Tibial artery (tissue), 4 donors: ENCODE measurements at regions of chr12 and their contacts with region 1.

Region 1: DNA sequence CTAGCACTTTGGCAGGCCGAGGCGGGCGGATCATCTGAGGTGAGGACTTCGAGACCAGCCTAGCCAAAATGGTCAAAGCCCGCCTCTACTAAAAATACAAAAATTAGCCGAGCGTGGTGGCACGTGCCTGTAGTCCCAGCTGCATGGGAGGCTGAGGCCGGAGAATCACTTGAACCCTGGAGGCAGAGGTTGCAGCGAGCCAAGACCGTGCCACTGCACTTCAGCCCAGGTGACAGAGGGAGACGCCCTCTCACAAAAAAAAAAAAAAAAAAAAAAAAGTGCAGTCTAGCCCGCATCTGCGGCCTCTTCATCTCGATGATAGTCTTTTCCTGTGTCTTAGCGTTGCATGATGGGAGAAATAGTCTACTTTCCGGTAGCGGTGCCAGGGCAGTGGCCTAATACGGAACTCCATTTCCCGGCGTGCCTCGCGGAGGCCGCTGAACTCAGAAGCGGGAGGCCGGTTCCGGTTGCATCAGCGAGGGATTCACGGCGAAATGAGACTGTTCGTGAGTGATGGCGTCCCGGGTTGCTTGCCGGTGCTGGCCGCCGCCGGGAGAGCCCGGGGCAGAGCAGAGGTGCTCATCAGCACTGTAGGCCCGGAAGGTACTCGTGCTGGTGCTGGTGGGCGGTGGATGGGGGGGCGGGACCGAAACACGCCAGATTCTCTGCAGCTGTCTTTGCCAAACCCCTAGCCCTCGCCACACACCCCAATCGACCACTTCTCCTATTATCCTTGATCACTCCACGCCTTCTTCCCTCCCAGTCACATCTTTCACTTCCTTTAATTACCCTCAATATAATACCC is at the start of gene MARS1:
- DNase-seq: peak; percentile 97
- H3K4me3 ChIP-seq: peak within 1 kb of the TSS; percentile 86 to 98
- H3K27ac ChIP-seq: peak within 1 kb of the TSS; percentile 78 to 82
- H3K4me1 ChIP-seq: peaks cover 0 to 17% (median 13%) of the 10 kb centered on the region in 4 donors
- H3K27me3 ChIP-seq: peaks cover 0 to 1% of the 10 kb centered on the region in 2 donors
- CTCF ChIP-seq: no peak

Region 2: DNA sequence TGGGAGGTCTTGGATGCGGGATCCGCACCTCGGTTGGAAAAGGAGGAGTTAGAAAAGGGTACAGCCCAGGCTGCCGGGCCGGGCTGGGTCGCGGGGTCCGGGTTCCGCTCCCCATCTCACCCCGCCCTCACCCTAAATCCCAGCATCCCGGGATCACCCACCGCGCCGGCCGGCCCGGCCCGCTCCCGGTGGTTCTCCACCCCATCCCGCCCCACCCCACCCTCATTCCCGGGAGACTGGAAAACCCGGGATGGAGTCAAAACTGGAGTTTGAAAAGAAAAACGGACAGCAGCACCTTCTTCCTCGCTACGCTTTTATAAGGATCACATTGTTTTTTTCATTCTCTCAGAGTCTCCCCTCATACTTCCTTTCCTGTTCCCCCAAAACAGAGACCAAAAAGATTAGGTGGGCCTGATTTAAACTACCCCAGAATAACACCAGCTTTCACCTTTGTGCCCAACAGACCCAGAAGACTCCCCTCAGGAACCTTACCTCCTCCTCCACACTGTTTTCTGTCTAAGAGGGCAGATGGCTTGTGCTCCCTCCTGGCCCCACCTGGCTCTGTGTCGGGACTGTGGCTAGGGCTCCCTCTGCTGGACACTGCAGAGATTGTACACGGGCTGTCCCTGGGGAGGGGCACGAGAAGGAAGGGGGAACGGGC is 25.4 kb before region 1 on chr12:
- intact Hi-C with region 1: loop called (anchors 1 kb)
- DNase-seq: peak; percentile 84 to 93
- H3K4me3 ChIP-seq: peak overlapping the region; percentile 58 to 71
- H3K27ac ChIP-seq: peak overlapping the region; percentile 70 to 72
- H3K4me1 ChIP-seq: peaks cover 0 to 27% (median 19%) of the 10 kb centered on the region in 4 donors
- H3K27me3 ChIP-seq: no peaks in the 10 kb centered on the region
- CTCF ChIP-seq: peak; percentile 93 to 95